ENCODE measurements at regions of chr6 and their contacts with region 1.

Region 1: DNA sequence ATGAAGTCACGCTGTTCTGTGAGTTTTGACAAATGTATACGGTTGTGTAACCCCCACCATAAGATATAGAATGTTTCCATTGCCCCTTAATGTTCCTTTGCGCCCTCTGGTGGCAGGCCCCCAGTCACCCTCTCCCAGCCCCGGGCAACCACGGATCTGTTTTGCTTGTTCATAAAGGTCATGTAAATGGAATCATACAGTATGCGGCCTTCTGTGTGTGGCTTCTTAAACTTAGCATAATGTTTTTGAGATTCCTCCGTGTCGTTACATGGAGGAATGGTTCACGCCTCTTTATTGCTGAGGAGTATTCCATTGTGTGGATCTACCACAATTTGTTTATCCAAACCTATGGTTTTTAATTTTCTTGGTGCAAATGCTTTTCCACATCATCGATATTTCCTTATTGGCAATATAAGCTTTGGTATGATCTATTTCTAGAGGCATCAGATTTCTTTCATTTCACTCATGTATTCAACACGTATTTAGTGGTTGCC is 28.4 kb downstream of the LYRM2 start:
- DNase-seq: peak; percentile 17
- ATAC-seq: peak; percentile 86
- H3K4me3 ChIP-seq: no peak overlapping the region
- H3K27ac ChIP-seq: no peak overlapping the region
- H3K4me1 ChIP-seq: no peaks in the 10 kb centered on the region
- H3K27me3 ChIP-seq: no peaks in the 10 kb centered on the region
- CTCF ChIP-seq: peak; percentile 93

Region 2: GRCh38 chr6:88972504-88973423 is 637.4 kb before region 1 on chr6:
- CTCF ChIA-PET with region 1: no interaction called
- POLR2A ChIA-PET with region 1: no interaction called
- in situ Hi-C with region 1: no loop called
- intact Hi-C with region 1: no loop called
- DNase-seq: no peak
- ATAC-seq: no peak
- H3K4me3 ChIP-seq: no peak overlapping the region
- H3K27ac ChIP-seq: no peak overlapping the region
- H3K4me1 ChIP-seq: no peaks in the 10 kb centered on the region
- H3K27me3 ChIP-seq: no peaks in the 10 kb centered on the region
- CTCF ChIP-seq: no peak

Region 3: GRCh38 chr6:89432875-89433251 is 177.3 kb before region 1 on chr6 and contains the start of gene ANKRD6:
- CTCF ChIA-PET with region 1: interaction called, 3 read pairs
- POLR2A ChIA-PET with region 1: interaction called, 3 read pairs
- in situ Hi-C with region 1: no loop called
- intact Hi-C with region 1: loop called (anchors 1 kb)
- DNase-seq: no peak
- ATAC-seq: peak; percentile 98
- H3K4me3 ChIP-seq: peak within 1 kb of the TSS; percentile 48 to 53
- H3K27ac ChIP-seq: no peak within 1 kb of the TSS
- H3K4me1 ChIP-seq: 0 out of 2 replicates have a peak, but pooled peaks cover 3% of the 10 kb centered on the region
- H3K27me3 ChIP-seq: peaks cover 4% of the 10 kb centered on the region; the same call in 1 of the 2 replicates
- CTCF ChIP-seq: peak; percentile 98
- total RNA-seq, gene ANKRD6: 2.4 TPM